PC-9 (cell line): ENCODE measurements at regions of chr3 and their contacts with region 1.

Region 1: DNA sequence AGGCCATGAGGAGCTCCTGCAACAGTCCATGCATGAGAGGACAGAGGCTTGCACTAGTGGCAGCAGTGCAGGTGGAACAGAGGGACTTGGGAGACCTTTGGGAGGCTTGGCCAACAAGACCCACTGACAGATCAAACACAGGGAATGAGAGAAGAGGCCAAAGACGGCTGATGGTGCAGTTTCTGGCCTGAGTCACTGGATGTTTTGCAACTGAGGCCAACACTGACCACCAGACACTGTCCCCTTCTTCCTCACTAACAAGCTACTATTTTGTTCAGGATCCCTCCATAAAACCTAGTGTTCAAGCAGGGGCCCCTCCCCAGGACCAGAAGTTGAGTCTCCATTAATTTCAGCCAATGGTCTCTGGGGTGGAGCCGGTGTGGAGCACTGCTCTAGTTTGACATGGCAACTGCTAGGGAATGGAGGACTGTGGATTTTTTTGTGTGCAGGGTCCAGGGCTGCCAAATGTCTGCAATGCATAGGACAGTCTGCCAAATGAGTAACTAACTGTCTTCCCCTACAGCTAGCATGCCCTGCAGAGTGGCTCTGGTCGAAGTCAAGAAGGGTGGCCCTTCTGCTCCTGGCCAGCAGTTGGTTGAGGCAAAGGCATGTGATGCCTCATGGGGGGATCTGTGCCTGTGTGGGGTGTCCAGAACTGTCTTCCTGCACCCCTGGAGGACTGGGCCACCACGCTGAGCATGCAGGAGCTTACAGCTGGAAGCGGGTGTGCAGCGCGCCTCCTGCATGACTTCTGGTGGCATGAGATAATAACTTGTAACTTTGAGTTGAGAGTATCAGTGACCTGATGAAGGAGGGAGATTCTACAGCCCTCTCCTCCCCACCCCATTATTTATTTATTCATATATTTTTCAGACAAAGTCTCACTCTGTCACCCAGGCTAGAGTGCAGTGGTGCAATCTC is 4.8 kb downstream of the TPRA1 start:
- DNase-seq: no peak
- H3K4me3 ChIP-seq: no peak overlapping the region
- H3K27ac ChIP-seq: no peak overlapping the region
- H3K4me1 ChIP-seq: peaks cover 12% of the 10 kb centered on the region
- H3K27me3 ChIP-seq: no peaks in the 10 kb centered on the region
- CTCF ChIP-seq: no peak

Region 2: GRCh38 chr3:127679285-127680145 is 93.8 kb after region 1 on chr3:
- CTCF ChIA-PET with region 1: interaction called, 3 read pairs
- POLR2A ChIA-PET with region 1: interaction called, 17 read pairs
- intact Hi-C with region 1: no loop called
- DNase-seq: no peak
- H3K4me3 ChIP-seq: no peak overlapping the region
- H3K27ac ChIP-seq: no peak overlapping the region
- H3K4me1 ChIP-seq: no peaks in the 10 kb centered on the region
- H3K27me3 ChIP-seq: no peaks in the 10 kb centered on the region
- CTCF ChIP-seq: no peak